ENCODE measurements at regions of chr21 and their contacts with region 1.

Region 1: GRCh38 chr21:45973659-45974072 is 7.9 kb upstream of the COL6A1 start:
- DNase-seq: peak; percentile 87 to 92 (median 90)
- ATAC-seq: peak; percentile 39 to 48 (median 43)
- H3K4me3 ChIP-seq: peak overlapping the region; percentile 29 to 69 (median 60)
- H3K27ac ChIP-seq: peak overlapping the region; percentile 90 to 99 (median 98)
- H3K4me1 ChIP-seq: peaks cover 7 to 72% (median 50%) of the 10 kb centered on the region in 12 donors
- H3K27me3 ChIP-seq: peaks cover 0 to 43% (median 0%) of the 10 kb centered on the region in 9 donors
- CTCF ChIP-seq: peak; percentile 69 to 88 (median 78)
- POLR2A ChIP-seq: no peak

Region 2: DNA sequence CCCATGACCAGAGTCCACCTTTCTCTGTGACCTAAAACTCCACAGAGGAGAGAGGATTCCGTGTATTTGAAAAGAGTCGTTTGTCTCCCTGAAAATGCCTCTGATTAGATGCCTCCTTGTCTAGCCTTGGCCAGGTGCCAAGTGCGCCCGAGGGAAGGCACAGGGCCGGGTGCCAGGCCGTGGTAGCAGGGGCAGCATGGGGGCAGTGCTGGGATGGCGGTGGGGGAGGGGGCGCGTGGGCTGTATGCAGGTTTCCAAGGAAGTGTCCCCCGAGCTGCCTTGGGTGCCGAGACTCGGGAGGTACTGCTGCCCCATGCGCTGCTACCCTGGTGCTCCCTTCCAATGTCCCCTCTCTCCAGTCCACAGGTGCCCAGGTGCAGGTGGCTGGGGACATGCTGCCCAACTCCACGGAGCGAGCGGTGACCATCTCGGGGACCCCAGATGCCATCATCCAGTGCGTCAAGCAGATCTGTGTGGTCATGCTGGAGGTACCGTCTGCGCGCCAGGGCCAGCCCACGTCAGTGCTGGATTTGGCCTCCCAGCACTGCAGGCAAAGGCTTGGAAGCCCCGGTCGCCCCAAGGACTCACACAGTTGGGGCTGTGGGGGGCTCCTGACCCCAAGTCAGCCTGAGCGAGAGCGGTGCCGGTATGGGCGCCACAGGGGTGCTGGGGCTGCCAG is 63.0 kb before region 1 on chr21:
- intact Hi-C with region 1: no loop called
- DNase-seq: peak in 3 of 5 donors; percentile 23 to 62 (median 26)
- ATAC-seq: peak in 2 of 4 donors; percentile 9 to 11
- H3K4me3 ChIP-seq: no peak overlapping the region
- H3K27ac ChIP-seq: no peak overlapping the region
- H3K4me1 ChIP-seq: peaks cover 0 to 7% (median 0%) of the 10 kb centered on the region in 12 donors
- H3K27me3 ChIP-seq: no peaks in the 10 kb centered on the region
- CTCF ChIP-seq: no peak
- POLR2A ChIP-seq: no peak

Region 3: GRCh38 chr21:46048926-46049889 is 75.5 kb after region 1 on chr21:
- intact Hi-C with region 1: loop called in 1 of 10 experiments (anchors 5 kb)
- DNase-seq: peak; percentile 87 to 91 (median 89)
- ATAC-seq: peak; percentile 85 to 95 (median 94)
- H3K4me3 ChIP-seq: no peak overlapping the region
- H3K27ac ChIP-seq: peak overlapping the region; percentile 65 to 90 (median 80)
- H3K4me1 ChIP-seq: peaks cover 0 to 19% (median 7%) of the 10 kb centered on the region in 12 donors
- H3K27me3 ChIP-seq: no peaks in the 10 kb centered on the region
- CTCF ChIP-seq: no peak
- POLR2A ChIP-seq: no peak

Region 4: DNA sequence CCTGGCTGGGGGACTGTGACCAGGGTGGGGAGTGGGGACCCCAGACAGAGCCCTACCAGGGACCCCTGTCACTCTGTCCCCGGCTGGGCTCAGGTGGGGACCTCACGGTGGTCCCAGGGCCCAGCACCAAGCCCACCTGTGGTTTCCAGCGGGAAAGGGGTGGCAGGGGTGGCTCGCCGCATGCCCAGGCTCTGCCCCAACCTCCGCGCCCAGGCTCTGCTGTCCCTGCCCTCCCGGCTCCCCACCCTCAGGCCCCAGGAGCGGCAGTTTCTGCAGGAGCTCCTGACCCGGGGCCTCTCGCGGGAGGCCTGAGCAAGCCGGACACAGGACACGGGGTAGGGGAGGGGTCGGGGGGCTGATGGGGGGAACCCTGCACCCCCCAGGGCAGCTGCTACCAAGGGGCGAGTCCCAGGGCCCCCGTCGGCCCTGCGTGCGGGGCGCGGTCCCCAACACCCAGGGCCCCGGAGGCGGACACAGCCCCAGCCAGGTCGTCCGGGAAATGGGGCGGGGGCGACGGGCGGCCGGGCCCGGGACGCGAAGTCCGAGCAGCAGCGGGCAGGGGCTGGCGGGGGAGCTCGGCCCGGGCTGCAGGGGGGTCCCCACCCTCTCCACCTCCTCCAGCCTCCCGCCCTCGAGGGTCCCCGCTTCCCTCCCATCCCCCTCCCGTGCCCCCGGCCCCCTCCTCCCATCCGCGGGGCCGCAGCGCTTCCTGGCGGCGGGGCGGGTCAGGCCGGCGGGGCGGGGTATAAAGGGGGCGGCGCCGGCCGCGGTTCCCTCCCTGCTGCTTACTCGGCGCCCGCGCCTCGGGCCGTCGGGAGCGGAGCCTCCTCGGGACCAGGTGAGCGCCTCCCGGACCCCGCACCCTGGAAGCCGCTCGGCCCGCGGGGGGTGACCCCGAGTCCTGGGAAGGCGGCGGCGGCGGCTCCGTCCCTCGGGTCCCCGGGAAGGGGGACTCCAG is 123.9 kb after region 1 on chr21 and contains the start of gene COL6A2:
- intact Hi-C with region 1: loop called (anchors 1 to 5 kb)
- DNase-seq: peak; percentile 67 to 86 (median 76)
- ATAC-seq: peak; percentile 68 to 89 (median 82)
- H3K4me3 ChIP-seq: peak within 1 kb of the TSS; percentile 68 to 97 (median 87)
- H3K27ac ChIP-seq: peak within 1 kb of the TSS; percentile 73 to 99 (median 94)
- H3K4me1 ChIP-seq: peaks cover 0 to 34% (median 10%) of the 10 kb centered on the region in 12 donors
- H3K27me3 ChIP-seq: peaks cover 0 to 20% (median 0%) of the 10 kb centered on the region in 9 donors
- CTCF ChIP-seq: peak in 10 of 12 donors; percentile 16 to 66 (median 48)
- POLR2A ChIP-seq: peak in 1 of 2 donors; percentile 80
- total RNA-seq, gene COL6A2: 118 to 484 (median 158) TPM

Region 5: DNA sequence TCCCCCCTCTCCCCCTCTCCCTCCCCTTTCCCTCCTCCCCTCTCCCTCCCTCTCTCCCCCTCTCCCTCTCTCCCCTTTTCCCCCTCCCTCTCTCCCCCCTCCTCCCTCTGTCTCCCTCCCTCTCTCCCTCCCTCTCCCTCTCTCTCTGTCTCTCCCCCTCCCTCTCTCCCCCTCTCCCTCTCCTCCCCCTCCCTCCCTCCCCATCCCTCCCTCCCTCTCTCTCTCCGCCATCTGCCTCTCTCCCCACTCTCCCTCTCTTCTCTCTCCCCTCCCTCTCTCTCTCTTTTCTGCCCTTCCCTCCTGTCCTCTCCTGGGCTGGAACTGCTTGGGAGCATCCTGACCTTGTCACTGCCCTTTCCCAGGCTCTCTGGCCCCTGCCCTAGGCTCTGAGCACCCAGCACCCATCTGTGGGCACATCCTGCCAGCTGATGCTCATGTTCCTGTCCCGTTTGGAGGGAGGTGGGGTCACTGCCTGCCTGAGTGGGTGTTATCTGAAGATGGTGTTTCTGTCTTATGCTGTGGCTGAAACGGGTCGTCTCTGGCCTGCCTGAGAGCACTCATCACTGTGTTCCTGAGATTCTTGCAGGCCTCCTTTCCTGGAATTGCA is 170.9 kb after region 1 on chr21:
- intact Hi-C with region 1: loop called in 3 of 10 experiments (anchors 5 kb)
- DNase-seq: peak in 2 of 5 donors; percentile 13
- ATAC-seq: no peak
- H3K4me3 ChIP-seq: no peak overlapping the region
- H3K27ac ChIP-seq: no peak overlapping the region
- H3K4me1 ChIP-seq: peaks cover 0 to 9% (median 6%) of the 10 kb centered on the region in 12 donors
- H3K27me3 ChIP-seq: no peaks in the 10 kb centered on the region
- CTCF ChIP-seq: no peak
- POLR2A ChIP-seq: no peak

Region 6: DNA sequence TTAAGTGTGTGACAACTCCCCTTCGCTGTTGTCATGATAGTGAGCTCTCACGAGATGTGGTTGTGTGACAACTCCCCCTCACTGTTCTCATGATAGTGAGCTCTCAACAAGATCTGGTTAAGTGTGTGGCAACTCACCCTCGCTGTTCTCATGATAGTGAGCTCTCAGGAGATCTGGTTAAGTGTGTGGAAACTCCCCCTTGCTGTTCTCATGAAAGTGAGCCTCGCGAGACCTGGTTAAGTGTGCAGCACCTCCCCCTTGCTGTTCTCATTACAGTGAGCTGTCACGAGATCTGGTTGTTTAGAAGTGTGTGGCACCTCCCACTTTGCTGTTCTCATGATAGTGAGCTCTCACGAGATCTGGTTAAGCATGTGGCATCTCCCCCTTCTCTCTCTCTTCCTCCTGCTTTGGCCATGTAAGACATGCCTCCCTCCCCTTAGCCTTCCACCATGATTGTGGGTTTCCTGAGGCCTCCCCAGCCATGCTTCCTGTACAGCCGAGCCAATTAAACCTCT is 280.0 kb after region 1 on chr21:
- intact Hi-C with region 1: loop called in 1 of 10 experiments (anchors 5 kb)
- DNase-seq: peak in 1 of 5 donors; percentile 12
- ATAC-seq: no peak
- H3K4me3 ChIP-seq: no peak overlapping the region
- H3K27ac ChIP-seq: no peak overlapping the region
- H3K4me1 ChIP-seq: peaks cover 0 to 24% (median 1%) of the 10 kb centered on the region in 12 donors
- H3K27me3 ChIP-seq: no peaks in the 10 kb centered on the region
- CTCF ChIP-seq: no peak
- POLR2A ChIP-seq: no peak

Region 7: GRCh38 chr21:46551636-46552241 is 578.1 kb after region 1 on chr21:
- intact Hi-C with region 1: no loop called
- DNase-seq: peak in 1 of 5 donors; percentile 56
- ATAC-seq: peak in 1 of 4 donors; percentile 10
- H3K4me3 ChIP-seq: peak overlapping the region in 1 of 12 donors; percentile 45
- H3K27ac ChIP-seq: peak overlapping the region in 1 of 12 donors; percentile 90
- H3K4me1 ChIP-seq: peaks cover 0 to 38% (median 0%) of the 10 kb centered on the region in 12 donors
- H3K27me3 ChIP-seq: no peaks in the 10 kb centered on the region
- CTCF ChIP-seq: no peak
- POLR2A ChIP-seq: no peak